PC-9 (cell line): ENCODE measurements at regions of chr14 and their contacts with region 1.

Region 1: DNA sequence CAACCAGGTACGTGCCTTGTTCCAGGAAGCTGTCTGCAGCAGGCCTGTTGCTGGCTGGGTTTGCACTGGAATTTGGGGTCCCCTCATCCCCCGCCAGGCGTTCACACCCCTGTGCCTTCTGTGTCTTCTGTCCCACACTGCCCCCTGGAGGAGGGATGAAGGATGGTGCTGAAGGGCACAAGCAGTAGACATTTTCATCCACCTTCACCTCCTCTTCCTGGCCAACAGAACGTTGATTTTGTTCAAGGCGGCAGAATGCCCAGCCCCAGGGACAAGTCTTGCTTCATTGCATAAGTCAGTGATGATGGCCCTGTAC is 122.1 kb downstream of the CALM1 start:
- DNase-seq: no peak
- H3K4me3 ChIP-seq: no peak overlapping the region
- H3K27ac ChIP-seq: no peak overlapping the region
- H3K4me1 ChIP-seq: peaks cover 10% of the 10 kb centered on the region
- H3K27me3 ChIP-seq: no peaks in the 10 kb centered on the region
- CTCF ChIP-seq: peak; percentile 74

Region 2: GRCh38 chr14:90444036-90444696 is 74.7 kb before region 1 on chr14:
- CTCF ChIA-PET with region 1: no interaction called
- POLR2A ChIA-PET with region 1: interaction called, 3 read pairs
- intact Hi-C with region 1: loop called (anchors 2 kb)
- DNase-seq: peak; percentile 73 to 99
- H3K4me3 ChIP-seq: peak overlapping the region; percentile 3; the same call in 1 of the 2 replicates
- H3K27ac ChIP-seq: peak overlapping the region; percentile 91
- H3K4me1 ChIP-seq: peaks cover 29% of the 10 kb centered on the region
- H3K27me3 ChIP-seq: no peaks in the 10 kb centered on the region
- CTCF ChIP-seq: no peak

Region 3: DNA sequence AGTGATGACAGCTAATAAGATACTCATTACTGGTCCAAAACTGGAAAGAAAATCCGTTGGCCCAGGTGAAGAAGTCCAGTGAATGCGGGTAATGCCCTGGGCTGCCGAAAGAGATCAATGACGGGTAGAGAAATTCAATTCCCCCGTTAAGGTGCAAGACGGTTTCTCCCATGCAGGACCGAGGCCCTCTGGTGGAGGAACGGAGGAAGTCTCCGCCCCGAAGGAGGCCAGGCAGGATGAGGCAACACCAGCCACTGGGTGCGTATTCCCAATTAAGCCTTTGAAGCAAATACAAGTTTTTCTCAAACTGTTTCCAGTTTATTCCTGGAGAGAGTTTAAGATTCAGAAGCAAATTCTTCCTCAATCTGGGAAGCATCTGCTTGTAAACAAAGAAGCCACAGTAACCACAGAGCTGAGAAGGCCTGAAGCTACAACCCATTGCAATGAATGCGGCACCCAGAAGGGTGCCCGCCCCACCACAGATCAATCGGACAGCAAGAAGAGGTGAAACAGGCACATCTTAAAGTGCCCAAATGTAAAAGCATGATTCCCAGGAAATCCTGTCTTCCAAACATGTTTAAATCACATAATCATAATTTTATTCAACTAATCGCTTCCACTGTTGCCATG is 178.8 kb after region 1 on chr14:
- CTCF ChIA-PET with region 1: no interaction called
- POLR2A ChIA-PET with region 1: no interaction called
- intact Hi-C with region 1: loop called (anchors 10 kb)
- DNase-seq: peak; percentile 38 to 53
- H3K4me3 ChIP-seq: no peak overlapping the region
- H3K27ac ChIP-seq: no peak overlapping the region
- H3K4me1 ChIP-seq: no peaks in the 10 kb centered on the region
- H3K27me3 ChIP-seq: no peaks in the 10 kb centered on the region
- CTCF ChIP-seq: peak; percentile 86

Region 4: DNA sequence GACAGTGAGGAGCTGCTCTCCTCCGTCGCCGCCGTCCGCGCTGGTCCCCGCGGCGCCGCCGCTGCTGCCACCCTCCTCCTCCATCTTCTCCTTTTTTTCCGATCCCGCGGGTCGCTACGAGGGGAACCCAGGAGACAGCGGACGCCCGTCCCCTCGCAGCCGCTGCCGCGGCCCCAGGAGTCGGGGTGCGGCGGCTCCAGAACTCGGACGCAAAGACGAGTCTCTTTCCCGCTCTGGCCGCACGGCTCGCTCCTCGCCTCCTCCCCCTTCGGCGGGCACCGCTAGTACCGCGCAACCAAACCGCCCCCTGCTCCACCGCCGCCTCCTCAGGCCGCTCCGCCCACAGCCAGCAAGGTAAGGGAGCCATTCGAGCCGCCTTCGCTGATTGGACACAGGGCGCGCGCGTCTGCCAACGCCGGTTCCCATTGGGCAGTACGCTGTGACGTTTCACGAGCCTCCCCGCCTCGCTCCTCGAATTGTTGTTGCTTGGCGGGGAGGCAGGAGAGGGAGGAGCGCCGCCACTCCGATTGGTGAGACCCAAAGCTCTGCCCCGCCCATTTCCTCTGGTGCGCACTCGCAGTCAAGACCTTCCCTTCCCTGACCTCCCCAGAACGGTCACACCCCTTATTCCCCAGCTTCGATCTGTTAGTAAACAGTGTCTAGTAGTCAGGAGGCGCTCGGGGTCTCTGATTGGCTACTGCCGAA is 541.6 kb after region 1 on chr14 and contains the start of gene RPS6KA5:
- CTCF ChIA-PET with region 1: no interaction called
- POLR2A ChIA-PET with region 1: no interaction called
- intact Hi-C with region 1: loop called (anchors 10 kb)
- DNase-seq: peak; percentile 88 to 96
- H3K4me3 ChIP-seq: peak within 1 kb of the TSS; percentile 82
- H3K27ac ChIP-seq: peak within 1 kb of the TSS; percentile 67
- H3K4me1 ChIP-seq: peaks cover 22% of the 10 kb centered on the region
- H3K27me3 ChIP-seq: no peaks in the 10 kb centered on the region
- CTCF ChIP-seq: 0 out of 2 replicates have a peak, but pooled peaks have one; percentile 15
- total RNA-seq, gene RPS6KA5: 3.0 and 3.5 TPM in 2 replicates